ENCODE measurements at regions of chr14 and their contacts with region 1.

Region 1: DNA sequence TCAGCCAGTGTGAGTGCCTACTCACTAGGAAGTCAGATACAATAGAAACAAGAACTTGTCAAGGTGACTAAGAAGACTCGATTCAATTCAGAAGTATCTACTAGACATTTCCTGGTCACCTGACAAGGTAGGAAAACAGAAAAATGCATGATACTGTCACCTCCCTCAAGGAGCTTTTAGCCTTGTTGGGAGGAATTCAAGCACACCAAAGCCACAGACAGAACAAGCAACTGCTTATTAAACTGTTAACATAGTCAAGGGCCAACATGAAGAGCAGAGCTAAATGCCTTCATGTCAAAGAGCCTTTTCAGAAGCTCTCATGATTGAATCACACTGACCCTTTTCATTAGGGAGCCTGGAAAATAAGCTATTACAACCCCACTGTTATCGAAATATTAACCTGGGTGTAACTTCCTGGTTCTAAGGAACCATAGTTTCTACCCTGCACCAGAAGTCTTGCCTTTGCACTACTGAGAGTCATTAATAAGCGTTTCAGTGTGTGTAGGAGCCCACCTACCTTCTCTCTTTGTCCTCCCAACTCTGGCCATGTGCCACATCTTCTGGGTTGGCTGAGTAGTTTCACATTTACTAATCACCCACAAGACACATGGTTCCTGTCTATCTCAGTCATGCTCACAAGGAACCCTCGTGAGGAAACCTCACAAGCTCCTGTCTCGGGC is 31.0 kb upstream of the LGALS3 start:
- DNase-seq: no peak
- H3K4me3 ChIP-seq: no peak overlapping the region
- H3K27ac ChIP-seq: no peak overlapping the region
- H3K4me1 ChIP-seq: peaks cover 13% of the 10 kb centered on the region
- H3K27me3 ChIP-seq: no peaks in the 10 kb centered on the region
- CTCF ChIP-seq: no peak
- EP300 ChIP-seq: no peak
- POLR2A ChIP-seq: no peak

Region 2: DNA sequence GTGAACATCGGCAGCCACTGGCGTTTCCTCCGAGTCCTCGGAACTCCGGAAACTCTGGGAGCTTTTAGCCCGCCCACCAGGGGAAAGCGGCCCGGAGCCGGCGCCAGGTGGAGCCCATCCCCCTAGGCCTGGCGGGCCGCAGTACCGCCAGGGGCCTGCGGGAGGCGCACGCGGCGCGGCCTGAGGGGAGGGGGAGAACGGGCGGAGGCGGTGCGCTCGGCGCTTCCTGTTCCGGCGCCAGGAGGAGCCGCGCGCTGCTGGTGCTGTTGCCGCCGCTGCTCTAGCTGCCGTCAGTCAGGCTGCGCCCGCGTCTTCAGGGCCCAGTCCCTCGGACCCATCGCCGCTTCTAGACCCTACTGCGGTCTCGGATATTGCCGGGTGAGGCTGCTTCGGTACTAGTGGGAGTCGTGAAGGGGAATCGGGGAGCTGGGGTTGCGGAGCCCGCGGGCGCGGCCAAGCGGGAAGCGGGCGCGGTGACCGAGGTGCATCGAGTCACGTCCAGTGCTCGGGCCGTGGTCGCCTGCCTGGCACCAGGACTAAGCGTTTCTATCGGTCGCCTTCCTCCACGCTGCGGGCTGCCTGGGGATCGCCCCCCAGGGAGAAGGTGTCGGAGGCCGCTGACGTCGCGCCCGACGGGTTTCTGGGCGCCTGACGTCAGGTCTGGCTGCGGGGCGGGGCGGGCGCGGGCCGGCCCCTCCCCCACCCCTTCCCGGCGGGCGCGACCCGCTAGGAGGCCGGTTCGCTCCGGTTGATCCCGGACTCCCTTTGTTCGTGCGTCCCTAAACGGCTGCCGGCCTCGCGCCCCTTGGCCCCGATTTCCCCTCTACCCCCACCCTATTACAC is 46.4 kb before region 1 on chr14 and contains the start of gene MAPK1IP1L:
- intact Hi-C with region 1: loop called in 1 of 4 experiments (anchors 5 kb)
- DNase-seq: peak; percentile 90 to 97 (median 94)
- H3K4me3 ChIP-seq: peak within 1 kb of the TSS; percentile 86
- H3K27ac ChIP-seq: peak within 1 kb of the TSS; percentile 97 to 99
- H3K4me1 ChIP-seq: peaks cover 6% of the 10 kb centered on the region
- H3K27me3 ChIP-seq: no peaks in the 10 kb centered on the region
- CTCF ChIP-seq: peak; percentile 100
- EP300 ChIP-seq: peak; percentile 23
- POLR2A ChIP-seq: peak; percentile 100
- total RNA-seq, gene MAPK1IP1L: 35.6 to 130 (median 81.9) TPM

Region 3: DNA sequence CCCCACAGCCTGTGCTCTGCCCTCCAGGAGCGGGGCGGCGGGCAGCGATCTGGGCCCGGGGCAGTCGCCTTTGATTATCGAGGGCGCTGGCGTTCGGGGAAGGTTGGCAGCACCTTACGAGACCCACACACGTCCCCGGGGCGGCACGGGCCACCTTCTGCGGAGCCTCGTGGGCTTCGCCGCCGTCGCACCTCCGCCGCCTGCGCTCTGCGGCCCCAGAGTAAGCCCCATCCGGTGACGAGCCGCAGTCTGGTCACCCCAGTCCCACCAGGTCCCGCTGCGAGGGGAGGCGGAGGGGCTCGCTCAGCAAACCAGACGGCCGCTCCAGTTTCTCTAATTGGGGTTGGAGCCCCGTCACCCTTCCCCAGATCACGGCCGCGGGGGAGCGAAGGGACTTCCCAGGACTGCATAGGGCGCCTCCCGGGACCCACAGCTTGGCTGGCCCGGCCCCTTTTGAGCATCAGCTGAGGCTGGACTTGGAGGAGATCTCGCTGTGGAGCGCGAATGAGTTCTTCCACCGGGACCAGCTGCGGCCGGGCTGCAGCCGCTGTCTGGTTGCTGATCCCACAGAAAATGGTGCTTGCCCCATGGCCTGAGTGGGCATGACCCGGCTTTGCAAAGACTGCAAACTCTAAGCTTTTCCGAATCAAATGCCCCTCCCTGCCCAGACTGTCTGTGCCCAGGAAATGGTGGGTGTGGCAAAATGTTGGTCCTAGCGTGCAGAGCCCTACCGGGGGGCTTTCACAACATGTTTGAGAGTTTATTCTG is 31.6 kb after region 1 on chr14:
- intact Hi-C with region 1: loop called in 2 of 4 experiments (anchors 5 kb)
- DNase-seq: peak; percentile 61 to 79 (median 73)
- H3K4me3 ChIP-seq: peak overlapping the region; percentile 75
- H3K27ac ChIP-seq: peak overlapping the region; percentile 94 to 97
- H3K4me1 ChIP-seq: peaks cover 22% of the 10 kb centered on the region
- H3K27me3 ChIP-seq: no peaks in the 10 kb centered on the region
- CTCF ChIP-seq: no peak
- EP300 ChIP-seq: no peak
- POLR2A ChIP-seq: no peak

Region 4: DNA sequence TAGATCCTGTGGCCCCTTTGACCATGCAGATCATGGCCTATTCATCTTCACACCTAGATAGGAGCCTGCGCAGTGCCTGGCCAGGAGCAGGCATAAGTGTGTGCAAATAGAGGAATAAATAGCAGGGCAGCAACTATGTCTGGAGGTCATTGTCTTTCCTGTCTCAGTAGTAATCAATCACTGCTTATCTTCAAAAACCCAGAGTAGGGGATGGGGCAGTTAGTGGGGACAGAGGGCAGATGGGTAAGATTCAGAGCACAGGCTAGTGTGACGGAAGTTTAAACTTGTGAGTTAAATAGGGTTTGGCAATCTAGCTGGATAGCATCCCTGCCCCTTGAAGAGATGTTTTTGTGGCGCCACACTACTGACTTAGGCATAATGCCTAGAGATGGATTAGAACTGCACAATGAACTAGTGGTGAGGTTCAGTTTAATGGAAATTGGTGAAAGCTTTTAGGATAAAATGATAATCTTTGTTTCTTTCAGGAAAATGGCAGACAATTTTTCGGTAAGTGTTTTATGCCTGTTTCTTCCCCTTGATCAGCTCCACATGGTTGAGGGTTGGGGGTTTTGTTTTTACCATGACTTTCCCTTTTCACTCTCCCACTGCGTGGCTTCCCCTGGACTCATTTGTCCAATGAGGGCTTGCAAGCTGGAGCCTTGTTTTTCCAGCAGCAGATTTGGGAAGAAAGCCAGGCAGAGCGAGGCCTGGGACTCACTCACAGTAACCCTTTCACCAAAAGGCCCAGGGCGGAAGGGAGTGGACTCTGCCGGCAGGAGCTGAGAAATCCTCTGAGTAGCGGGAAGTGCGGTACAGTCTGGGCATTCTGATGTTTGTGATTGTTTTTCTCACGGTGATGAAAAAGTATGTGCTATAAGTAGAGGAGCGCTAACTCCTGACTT is 39.1 kb after region 1 on chr14:
- intact Hi-C with region 1: loop called in 1 of 4 experiments (anchors 5 kb)
- DNase-seq: peak; percentile 84 to 90 (median 87)
- H3K4me3 ChIP-seq: peak overlapping the region; percentile 19
- H3K27ac ChIP-seq: peak overlapping the region in 1 of 2 donors; percentile 65
- H3K4me1 ChIP-seq: peaks cover 24% of the 10 kb centered on the region
- H3K27me3 ChIP-seq: no peaks in the 10 kb centered on the region
- CTCF ChIP-seq: no peak
- EP300 ChIP-seq: no peak
- POLR2A ChIP-seq: no peak

Region 5: GRCh38 chr14:55152052-55152753 is 54.2 kb after region 1 on chr14:
- intact Hi-C with region 1: loop called in 2 of 4 experiments (anchors 10 kb)
- DNase-seq: no peak
- H3K4me3 ChIP-seq: no peak overlapping the region
- H3K27ac ChIP-seq: no peak overlapping the region
- H3K4me1 ChIP-seq: no peaks in the 10 kb centered on the region
- H3K27me3 ChIP-seq: no peaks in the 10 kb centered on the region
- CTCF ChIP-seq: no peak
- EP300 ChIP-seq: no peak
- POLR2A ChIP-seq: no peak